ENCODE measurements at regions of chr16 and their contacts with region 1.

Region 1: GRCh38 chr16:52191531-52192134 is 355.3 kb downstream of the TOX3 start:
- DNase-seq: peak in 1 of 2 donors; percentile 14
- ATAC-seq: no peak
- H3K4me3 ChIP-seq: no peak overlapping the region
- H3K27ac ChIP-seq: no peak overlapping the region
- H3K4me1 ChIP-seq: no peaks in the 10 kb centered on the region
- H3K27me3 ChIP-seq: no peaks in the 10 kb centered on the region
- CTCF ChIP-seq: peak; percentile 47 to 70 (median 58)
- POLR2A ChIP-seq: no peak

Region 2: GRCh38 chr16:52912565-52913173 is 721.0 kb after region 1 on chr16:
- in situ Hi-C with region 1: loop called in 1 of 4 experiments (anchors 25 kb)
- intact Hi-C with region 1: loop called (anchors 5 kb)
- DNase-seq: no peak
- ATAC-seq: no peak
- H3K4me3 ChIP-seq: no peak overlapping the region
- H3K27ac ChIP-seq: no peak overlapping the region
- H3K4me1 ChIP-seq: no peaks in the 10 kb centered on the region
- H3K27me3 ChIP-seq: no peaks in the 10 kb centered on the region
- CTCF ChIP-seq: peak in 4 of 5 experiments; percentile 17 to 50 (median 34)
- POLR2A ChIP-seq: no peak

Region 3: GRCh38 chr16:53022374-53022773 is 830.7 kb after region 1 on chr16:
- in situ Hi-C with region 1: loop called in 1 of 4 experiments (anchors 10 kb)
- intact Hi-C with region 1: loop called (anchors 5 kb)
- DNase-seq: no peak
- ATAC-seq: no peak
- H3K4me3 ChIP-seq: no peak overlapping the region
- H3K27ac ChIP-seq: no peak overlapping the region
- H3K4me1 ChIP-seq: no peaks in the 10 kb centered on the region
- H3K27me3 ChIP-seq: no peaks in the 10 kb centered on the region
- CTCF ChIP-seq: peak in 2 of 5 experiments; percentile 11 to 30
- POLR2A ChIP-seq: no peak

Measured in gastrocnemius medialis (tissue), 4 donors.